ENCODE measurements at regions of chr5 and their contacts with region 1.

Region 1: GRCh38 chr5:50667653-50668595 is 1.5 kb downstream of the PARP8 start:
- DNase-seq: peak; percentile 81

Region 2: GRCh38 chr5:50576686-50577256 is 91.2 kb before region 1 on chr5:
- intact Hi-C with region 1: no loop called
- DNase-seq: no peak

Region 3: GRCh38 chr5:50727149-50727496 is 59.2 kb after region 1 on chr5:
- intact Hi-C with region 1: no loop called
- DNase-seq: no peak

Region 4: DNA sequence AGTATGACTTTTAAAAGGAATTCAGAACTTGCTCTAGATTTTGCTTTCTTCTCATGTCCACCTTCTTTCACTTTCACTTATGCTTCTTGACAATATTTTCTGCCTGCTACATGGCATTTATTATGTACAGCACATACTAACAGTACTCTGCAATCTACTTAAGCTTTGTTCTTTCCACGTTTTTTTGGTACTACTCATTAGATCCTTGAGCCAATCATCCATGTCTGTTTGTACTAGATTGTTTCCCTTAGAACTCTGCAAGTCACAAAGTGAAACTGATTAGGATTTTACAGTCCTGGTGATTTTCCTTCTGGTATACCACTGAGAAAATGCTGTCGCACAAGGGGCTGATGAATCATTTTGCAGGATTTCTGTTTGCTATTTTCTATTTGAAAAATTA is 76.9 kb after region 1 on chr5:
- intact Hi-C with region 1: loop called (anchors 2 kb)
- DNase-seq: no peak